ENCODE measurements at regions of chr2 and their contacts with region 1.

Region 1: DNA sequence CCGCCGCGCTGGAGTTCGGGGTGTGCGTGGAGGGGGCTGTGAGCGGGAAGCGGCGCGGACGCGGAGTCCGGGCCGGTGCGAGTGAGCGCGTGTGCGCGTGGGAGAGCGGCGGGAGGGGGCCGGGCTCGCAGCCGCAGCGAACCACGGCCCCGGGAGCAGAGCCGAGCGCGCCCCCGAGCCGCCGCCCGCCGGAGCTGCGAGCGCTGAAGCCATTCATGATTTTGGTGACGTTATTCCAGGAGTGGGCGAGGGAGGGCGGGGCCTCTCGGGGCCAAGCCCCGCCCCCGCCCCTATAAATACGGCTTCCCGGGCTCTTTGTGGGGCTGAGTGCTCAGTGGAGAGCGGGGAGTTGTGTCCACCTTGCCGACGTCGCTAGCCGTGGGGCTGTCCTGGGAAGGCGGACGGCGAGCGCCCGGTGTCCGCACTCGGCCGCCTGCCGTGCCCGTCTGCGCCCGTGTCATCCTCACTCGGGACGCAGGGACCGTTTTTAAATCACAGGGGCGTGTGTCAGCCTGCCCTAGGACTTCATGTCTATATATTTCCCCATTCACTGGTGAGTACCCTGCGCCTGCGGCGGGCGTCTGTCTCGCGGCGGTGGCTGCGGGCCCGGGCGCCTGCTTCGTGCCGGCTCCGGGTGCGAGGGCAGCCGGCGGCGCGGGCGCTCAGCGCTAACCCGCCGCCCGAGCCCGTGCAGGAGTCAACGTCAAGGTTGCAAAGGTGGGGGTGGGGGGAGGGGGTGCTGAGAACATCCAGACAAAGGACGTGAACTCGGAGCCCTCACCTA is at the start of gene LBH:
- DNase-seq: peak; percentile 61 to 96
- H3K4me3 ChIP-seq: peak within 1 kb of the TSS; percentile 83
- H3K27ac ChIP-seq: peak within 1 kb of the TSS; percentile 82 to 93
- H3K4me1 ChIP-seq: peaks cover under 1 to 30% of the 10 kb centered on the region in 2 donors
- H3K27me3 ChIP-seq: no peaks in the 10 kb centered on the region
- CTCF ChIP-seq: peak in 2 of 3 experiments; percentile 2 to 4
- total RNA-seq, gene LBH: 116 TPM

Region 2: GRCh38 chr2:29963972-29964570 is 267.3 kb before region 1 on chr2:
- intact Hi-C with region 1: no loop called
- DNase-seq: no peak
- H3K4me3 ChIP-seq: no peak overlapping the region
- H3K27ac ChIP-seq: no peak overlapping the region
- H3K4me1 ChIP-seq: no peaks in the 10 kb centered on the region
- H3K27me3 ChIP-seq: no peaks in the 10 kb centered on the region
- CTCF ChIP-seq: no peak

Region 3: DNA sequence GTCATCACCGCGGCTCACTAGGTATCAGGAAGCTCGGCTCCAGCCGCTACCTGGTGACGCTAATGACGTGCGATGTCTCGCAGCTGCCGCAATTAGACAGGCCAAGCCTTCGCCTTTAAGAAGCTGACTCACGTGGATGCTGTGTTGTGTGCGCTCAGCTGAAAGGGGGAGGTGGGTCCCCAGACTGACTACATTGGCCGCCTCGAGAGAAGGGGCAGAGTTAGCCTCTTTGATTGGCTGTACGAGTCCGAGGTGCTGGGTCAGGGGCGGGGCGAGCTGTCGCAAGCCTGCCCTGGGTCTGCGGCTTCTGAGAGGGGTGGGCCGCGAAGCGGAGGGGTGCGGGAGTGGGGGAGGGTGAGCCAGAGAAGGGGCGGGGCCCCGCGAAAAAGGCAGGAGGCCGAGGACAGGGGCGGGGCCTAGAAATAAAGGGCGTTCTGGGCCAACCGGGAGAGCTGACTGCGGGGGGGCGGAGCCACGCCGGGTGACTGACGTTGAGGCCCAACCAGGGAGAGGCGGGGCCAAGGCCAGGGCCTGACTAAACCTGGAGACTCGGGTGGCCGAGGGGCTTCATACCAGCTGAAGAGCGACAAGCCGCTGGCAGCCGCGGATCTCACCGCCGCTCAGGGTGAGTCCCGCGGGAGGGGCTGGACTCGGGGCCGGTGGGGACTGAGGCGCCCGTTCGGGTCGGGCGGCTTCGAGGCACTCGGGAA is 84.8 kb before region 1 on chr2 and contains the start of gene YPEL5:
- intact Hi-C with region 1: loop called (anchors 5 kb)
- DNase-seq: peak; percentile 99 to 100
- H3K4me3 ChIP-seq: peak within 1 kb of the TSS; percentile 98 to 100
- H3K27ac ChIP-seq: peak within 1 kb of the TSS; percentile 97 to 100
- H3K4me1 ChIP-seq: peaks cover 5 to 22% of the 10 kb centered on the region in 2 donors
- H3K27me3 ChIP-seq: no peaks in the 10 kb centered on the region
- CTCF ChIP-seq: no peak
- total RNA-seq, gene YPEL5: 14.2 TPM

Region 4: DNA sequence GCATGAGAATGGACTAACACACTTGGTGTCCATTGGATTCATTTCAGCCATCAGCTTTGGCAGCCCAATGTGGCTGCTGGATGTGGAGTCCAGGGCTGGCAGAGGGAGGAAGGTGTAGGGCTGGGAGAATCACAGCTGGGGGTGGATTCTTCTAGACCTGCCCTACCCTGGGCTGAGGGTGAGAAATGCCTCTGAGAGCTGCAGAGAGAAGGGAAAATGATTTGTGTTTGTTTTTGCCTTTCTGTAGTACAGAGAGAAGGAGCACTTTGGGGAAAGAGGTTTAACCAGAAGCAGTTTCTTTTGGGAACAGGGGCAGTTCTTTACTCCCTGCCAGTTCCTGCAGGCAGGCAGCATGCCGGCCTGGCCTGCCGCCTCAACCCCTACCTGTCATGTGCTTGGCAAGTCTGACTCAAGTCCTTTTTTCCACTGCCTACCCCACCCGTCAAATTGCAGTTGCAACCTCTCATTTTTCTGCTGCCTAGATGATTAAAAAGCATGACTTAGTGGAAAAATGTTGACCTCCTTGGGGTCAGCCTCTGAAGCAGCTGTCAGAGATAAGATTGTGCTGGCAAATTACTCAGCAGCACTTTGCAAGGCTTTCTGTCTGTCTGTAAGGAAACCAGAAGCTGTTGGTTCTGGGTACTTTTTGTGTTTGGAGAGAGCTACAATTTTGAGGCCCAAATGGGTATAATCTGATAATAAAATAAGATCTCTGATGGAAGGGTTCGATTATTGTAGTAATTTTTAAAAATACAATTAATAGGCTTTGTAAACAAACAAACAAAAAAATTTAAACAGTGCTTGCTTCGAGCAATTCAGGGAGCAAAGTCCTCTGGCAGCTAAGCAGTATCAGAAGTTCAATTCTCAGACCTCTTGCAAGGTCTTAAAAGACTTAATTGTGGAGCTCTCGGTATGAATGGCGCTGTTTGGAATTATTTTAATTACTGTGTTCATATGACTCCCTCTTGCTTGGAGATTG is 21.6 kb after region 1 on chr2:
- intact Hi-C with region 1: loop called (anchors 1 kb)
- DNase-seq: peak in 1 of 2 donors; percentile 90
- H3K4me3 ChIP-seq: peak overlapping the region in 1 of 2 donors; percentile 36
- H3K27ac ChIP-seq: peak overlapping the region; percentile 75 to 78
- H3K4me1 ChIP-seq: peaks cover 23 to 38% of the 10 kb centered on the region in 2 donors
- H3K27me3 ChIP-seq: no peaks in the 10 kb centered on the region
- CTCF ChIP-seq: no peak

Region 5: GRCh38 chr2:30264274-30264673 is 32.9 kb after region 1 on chr2:
- intact Hi-C with region 1: no loop called
- DNase-seq: no peak
- H3K4me3 ChIP-seq: no peak overlapping the region
- H3K27ac ChIP-seq: no peak overlapping the region
- H3K4me1 ChIP-seq: peaks cover 5 to 14% of the 10 kb centered on the region in 2 donors
- H3K27me3 ChIP-seq: no peaks in the 10 kb centered on the region
- CTCF ChIP-seq: no peak

Region 6: GRCh38 chr2:30346471-30347169 is 115.2 kb after region 1 on chr2:
- intact Hi-C with region 1: loop called (anchors 5 kb)
- DNase-seq: peak; percentile 19 to 87
- H3K4me3 ChIP-seq: peak overlapping the region; percentile 26 to 32
- H3K27ac ChIP-seq: peak overlapping the region; percentile 58 to 85
- H3K4me1 ChIP-seq: peaks cover 0 to 21% of the 10 kb centered on the region in 2 donors
- H3K27me3 ChIP-seq: no peaks in the 10 kb centered on the region
- CTCF ChIP-seq: no peak

Region 7: GRCh38 chr2:30433541-30434299 is 202.3 kb after region 1 on chr2:
- intact Hi-C with region 1: loop called (anchors 5 kb)
- DNase-seq: no peak
- H3K4me3 ChIP-seq: no peak overlapping the region
- H3K27ac ChIP-seq: peak overlapping the region; percentile 75 to 81
- H3K4me1 ChIP-seq: peaks cover 6 to 22% of the 10 kb centered on the region in 2 donors
- H3K27me3 ChIP-seq: no peaks in the 10 kb centered on the region
- CTCF ChIP-seq: no peak

Region 8: GRCh38 chr2:30691948-30692828 is 460.8 kb after region 1 on chr2:
- intact Hi-C with region 1: loop called (anchors 5 kb)
- DNase-seq: peak in 1 of 2 donors; percentile 61
- H3K4me3 ChIP-seq: no peak overlapping the region
- H3K27ac ChIP-seq: peak overlapping the region; percentile 91 to 94
- H3K4me1 ChIP-seq: peaks cover 18 to 62% of the 10 kb centered on the region in 2 donors
- H3K27me3 ChIP-seq: no peaks in the 10 kb centered on the region
- CTCF ChIP-seq: peak in 1 of 3 experiments; percentile 7

Measured in ascending aorta (tissue), 2 donors.